Body of pancreas (tissue), 4 donors: ENCODE measurements at regions of chr2 and their contacts with region 1.

Region 1: GRCh38 chr2:116200086-116200485 is 1614.4 kb upstream of the DDX18 start:
- DNase-seq: no peak
- ATAC-seq: no peak
- H3K4me3 ChIP-seq: no peak overlapping the region
- H3K27ac ChIP-seq: no peak overlapping the region
- H3K4me1 ChIP-seq: no peaks in the 10 kb centered on the region
- H3K27me3 ChIP-seq: no peaks in the 10 kb centered on the region
- CTCF ChIP-seq: no peak
- POLR2A ChIP-seq: no peak

Region 2: DNA sequence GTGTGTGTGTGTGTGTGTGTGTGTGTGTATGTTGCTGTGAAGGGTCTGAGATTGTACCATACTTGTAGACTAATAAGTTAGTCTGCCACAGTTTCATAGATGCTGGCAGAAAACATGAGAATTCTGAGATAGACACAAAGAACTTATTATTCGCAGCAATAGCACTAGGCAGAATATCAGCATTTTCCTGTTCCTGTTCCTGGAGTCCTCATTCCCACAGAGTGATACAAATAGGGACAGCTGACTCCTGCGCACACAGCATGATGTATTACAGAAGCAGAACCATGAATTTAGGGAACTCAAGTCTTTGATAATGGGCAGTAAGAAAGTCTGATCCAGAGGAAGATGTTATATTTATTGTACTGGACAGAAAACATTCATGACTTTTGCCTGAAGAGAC is 291.4 kb before region 1 on chr2:
- intact Hi-C with region 1: loop called (anchors 10 kb)
- DNase-seq: no peak
- ATAC-seq: no peak
- H3K4me3 ChIP-seq: no peak overlapping the region
- H3K27ac ChIP-seq: no peak overlapping the region
- H3K4me1 ChIP-seq: no peaks in the 10 kb centered on the region
- H3K27me3 ChIP-seq: no peaks in the 10 kb centered on the region
- CTCF ChIP-seq: no peak
- POLR2A ChIP-seq: no peak

Region 3: DNA sequence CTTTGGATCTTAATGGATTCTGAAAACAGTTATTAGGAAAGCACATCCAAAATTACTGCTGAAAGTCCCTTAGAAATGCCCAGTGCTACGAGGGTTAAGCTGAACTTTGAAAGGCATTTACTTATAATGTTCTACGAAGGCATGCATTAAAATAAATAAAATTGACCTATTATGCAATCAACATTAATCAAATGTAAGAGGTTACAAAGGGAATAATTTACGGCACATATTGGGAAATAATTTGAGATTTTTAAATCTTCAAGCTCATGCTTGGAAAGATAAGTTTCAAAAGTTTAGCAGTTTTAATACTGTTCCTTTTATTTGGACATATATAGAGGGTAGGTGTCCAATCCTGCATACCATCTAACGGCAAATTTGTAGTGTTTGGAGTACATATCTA is 50.3 kb after region 1 on chr2:
- intact Hi-C with region 1: no loop called
- DNase-seq: no peak
- ATAC-seq: no peak
- H3K4me3 ChIP-seq: no peak overlapping the region
- H3K27ac ChIP-seq: no peak overlapping the region
- H3K4me1 ChIP-seq: no peaks in the 10 kb centered on the region
- H3K27me3 ChIP-seq: no peaks in the 10 kb centered on the region
- CTCF ChIP-seq: no peak
- POLR2A ChIP-seq: no peak